Cardiac septum (tissue), 1 donor: ENCODE measurements at regions of chr18 and their contacts with region 1.

Region 1: DNA sequence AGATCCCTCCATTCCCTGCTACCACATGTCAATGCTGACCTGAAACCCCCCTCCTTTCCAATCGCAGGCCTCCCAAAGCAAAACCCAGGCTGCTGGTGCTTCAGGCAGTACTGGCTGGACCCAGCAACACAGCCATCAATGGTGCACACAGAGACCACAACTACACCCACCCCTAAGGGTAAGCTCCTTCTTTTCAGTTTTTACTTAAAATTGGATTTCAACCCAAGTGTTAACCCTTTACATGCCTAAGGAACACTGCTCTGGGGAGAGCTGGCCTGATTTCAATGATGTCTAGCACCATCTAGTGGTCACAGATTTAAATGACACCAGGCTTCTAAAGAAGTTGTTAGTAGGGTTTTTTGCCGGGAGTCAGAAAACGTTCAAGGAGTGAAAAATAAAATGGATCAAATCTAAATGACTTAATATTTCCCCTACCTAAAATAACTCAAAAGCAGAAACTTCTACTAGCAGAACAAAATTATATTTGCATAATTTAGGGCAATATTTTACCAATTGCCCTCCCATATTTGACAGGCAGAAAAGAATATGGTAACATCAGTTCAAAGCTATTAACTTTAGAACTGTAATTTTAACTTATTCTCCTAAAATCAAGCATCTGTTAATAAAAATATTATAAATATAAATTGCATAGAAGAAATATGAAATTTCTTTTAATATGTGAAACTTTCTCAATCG is 24.6 kb downstream of the FECH start:
- DNase-seq: no peak

Region 2: DNA sequence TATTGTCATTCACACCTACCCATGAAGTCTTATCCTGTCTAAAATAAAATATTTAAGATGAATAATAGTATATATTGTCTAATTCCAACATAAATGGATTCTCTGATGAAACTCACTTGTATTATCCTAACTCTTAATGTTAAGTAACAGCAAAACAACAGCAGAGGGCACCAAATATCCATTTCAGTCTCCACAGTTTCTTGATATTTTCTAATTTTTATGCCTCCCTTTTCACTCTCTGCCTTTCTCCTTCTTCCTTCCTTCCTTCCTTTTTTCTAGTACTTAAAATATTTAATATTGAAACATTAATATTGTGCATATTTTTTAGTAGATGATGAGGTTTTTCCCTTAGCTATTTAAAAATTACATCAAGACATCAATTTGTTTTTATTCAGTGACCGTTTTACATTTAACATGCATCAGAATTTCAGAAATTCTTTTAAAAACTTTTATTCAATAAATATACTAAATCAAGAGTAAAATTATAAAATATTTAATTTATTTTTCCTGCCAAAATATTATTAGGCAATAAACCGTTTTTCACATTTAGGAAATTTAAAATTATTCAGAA is 813.1 kb before region 1 on chr18:
- intact Hi-C with region 1: loop called (anchors 5 kb)
- DNase-seq: no peak

Region 3: DNA sequence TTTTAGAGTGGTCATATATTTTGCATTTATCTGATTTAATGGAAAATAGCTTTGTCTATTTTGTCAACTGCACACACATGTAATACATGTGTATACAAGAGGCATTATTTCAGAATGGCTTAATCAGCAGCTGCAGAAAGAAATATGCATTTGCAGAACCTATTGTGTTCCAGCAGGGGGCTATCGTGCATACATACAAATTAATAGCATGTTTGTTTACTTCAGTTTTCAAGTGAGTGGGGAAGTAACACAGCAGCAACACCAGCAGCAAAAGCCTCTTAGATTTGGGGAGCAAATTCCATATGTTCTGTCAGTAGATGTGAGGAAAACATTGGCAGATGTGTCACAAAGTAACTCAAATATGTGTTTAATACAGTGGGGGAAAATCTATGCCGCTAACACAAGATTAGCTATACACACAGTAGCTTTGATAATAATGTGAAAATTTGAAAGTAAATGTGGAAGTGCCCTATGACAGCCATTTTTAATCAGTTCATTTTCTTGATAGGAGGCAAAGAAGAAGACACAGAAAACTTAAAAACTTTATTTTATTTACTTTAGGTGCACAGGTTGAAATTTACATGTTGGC is 692.6 kb before region 1 on chr18:
- intact Hi-C with region 1: loop called (anchors 10 kb)
- DNase-seq: no peak